Activated CD8-positive, alpha-beta T cell treated with anti-CD3 and anti-CD28 coated beads for 36 hours (primary cell): ENCODE measurements at regions of chr3 and their contacts with region 1.

Region 1: DNA sequence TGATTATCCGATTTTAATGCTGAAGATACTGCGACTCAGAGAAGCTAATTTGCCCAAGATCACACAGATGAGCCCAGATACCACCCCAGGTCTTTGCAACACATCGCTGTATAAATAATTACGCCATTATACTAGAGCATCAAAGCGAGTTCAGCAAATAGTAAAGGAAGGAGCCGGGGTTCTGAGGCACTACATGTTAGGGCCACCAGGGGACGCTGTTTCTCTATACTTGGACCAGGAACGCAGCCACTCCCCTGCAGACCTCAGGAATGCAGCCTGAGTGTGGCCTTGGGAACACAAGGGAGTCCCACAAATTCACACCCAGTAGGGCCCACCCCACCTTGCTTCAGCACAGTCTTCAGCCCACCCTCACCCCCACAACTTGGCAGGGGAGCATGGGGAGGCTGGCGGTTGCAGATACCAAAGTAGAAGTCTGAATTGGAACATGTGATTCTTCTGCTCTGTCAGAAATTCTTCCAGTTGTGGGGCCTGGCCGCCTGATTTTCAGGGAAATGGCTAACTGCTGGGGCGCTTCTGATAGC is 57.8 kb upstream of the RYK start:
- DNase-seq: peak; percentile 86
- ATAC-seq: peak; percentile 90
- H3K4me3 Mint-ChIP-seq: no peak overlapping the region
- H3K27ac Mint-ChIP-seq: no peak overlapping the region
- H3K4me1 Mint-ChIP-seq: peaks cover 2% of the 10 kb centered on the region
- H3K27me3 Mint-ChIP-seq: peaks cover 34% of the 10 kb centered on the region
- CTCF ChIP-seq: peak; percentile 96

Region 2: GRCh38 chr3:134197681-134198261 is 110.7 kb before region 1 on chr3:
- CTCF ChIA-PET with region 1: interaction called, 8 read pairs
- POLR2A ChIA-PET with region 1: no interaction called
- intact Hi-C with region 1: loop called (anchors 5 kb)
- DNase-seq: no peak
- ATAC-seq: peak; percentile 88
- H3K4me3 Mint-ChIP-seq: no peak overlapping the region
- H3K27ac Mint-ChIP-seq: no peak overlapping the region
- H3K4me1 Mint-ChIP-seq: peaks cover 8% of the 10 kb centered on the region
- H3K27me3 Mint-ChIP-seq: no peaks in the 10 kb centered on the region
- CTCF ChIP-seq: peak; percentile 77

Region 3: DNA sequence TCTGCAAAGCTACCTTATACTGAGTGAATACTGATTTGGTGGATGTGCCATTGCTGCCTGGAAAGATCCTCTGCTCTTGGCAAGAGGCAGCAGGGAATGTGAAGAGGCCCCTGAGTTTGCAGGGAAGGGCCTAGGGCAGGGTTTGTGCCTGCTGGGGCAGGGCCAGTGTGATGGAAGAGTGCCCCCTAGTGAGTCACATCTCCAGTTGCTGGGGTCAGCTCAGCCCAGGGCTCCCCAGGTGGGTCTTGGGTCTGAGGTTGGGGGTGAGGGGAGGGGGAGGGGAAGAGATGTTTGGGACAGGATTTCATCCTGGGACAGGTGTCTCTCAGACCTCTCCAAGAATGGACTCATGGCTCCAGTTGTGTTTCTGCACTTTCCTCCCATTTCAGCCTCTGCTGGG is 70.0 kb after region 1 on chr3:
- CTCF ChIA-PET with region 1: interaction called, 3 read pairs
- POLR2A ChIA-PET with region 1: no interaction called
- intact Hi-C with region 1: loop called (anchors 2 kb)
- DNase-seq: peak; percentile 40
- ATAC-seq: peak; percentile 57
- H3K4me3 Mint-ChIP-seq: no peak overlapping the region
- H3K27ac Mint-ChIP-seq: no peak overlapping the region
- H3K4me1 Mint-ChIP-seq: peaks cover 8% of the 10 kb centered on the region
- H3K27me3 Mint-ChIP-seq: peaks cover 39% of the 10 kb centered on the region
- CTCF ChIP-seq: peak; percentile 36

Region 4: DNA sequence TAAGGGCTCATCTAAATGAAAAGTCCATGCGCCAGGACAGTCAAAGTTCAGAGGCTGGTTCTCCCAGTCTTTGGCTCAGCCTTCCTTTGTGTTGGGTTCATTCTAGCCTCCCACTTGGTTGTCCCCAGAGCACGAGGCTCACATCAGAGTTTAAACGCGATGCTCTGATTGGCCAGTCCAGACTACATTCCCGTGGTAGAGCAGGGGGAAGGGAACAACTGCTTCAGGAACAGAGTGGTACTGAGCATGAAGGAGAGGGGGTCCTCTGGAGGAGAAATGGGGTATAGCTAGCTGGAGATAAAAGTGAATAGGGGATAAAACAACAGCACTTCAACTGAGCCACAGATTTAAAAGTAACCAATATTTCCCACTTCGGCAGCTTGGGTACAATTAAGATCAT is 145.2 kb after region 1 on chr3:
- CTCF ChIA-PET with region 1: interaction called, 10 read pairs
- POLR2A ChIA-PET with region 1: no interaction called
- intact Hi-C with region 1: no loop called
- DNase-seq: no peak
- ATAC-seq: no peak
- H3K4me3 Mint-ChIP-seq: no peak overlapping the region
- H3K27ac Mint-ChIP-seq: no peak overlapping the region
- H3K4me1 Mint-ChIP-seq: no peaks in the 10 kb centered on the region
- H3K27me3 Mint-ChIP-seq: peaks cover 6% of the 10 kb centered on the region
- CTCF ChIP-seq: no peak

Region 5: DNA sequence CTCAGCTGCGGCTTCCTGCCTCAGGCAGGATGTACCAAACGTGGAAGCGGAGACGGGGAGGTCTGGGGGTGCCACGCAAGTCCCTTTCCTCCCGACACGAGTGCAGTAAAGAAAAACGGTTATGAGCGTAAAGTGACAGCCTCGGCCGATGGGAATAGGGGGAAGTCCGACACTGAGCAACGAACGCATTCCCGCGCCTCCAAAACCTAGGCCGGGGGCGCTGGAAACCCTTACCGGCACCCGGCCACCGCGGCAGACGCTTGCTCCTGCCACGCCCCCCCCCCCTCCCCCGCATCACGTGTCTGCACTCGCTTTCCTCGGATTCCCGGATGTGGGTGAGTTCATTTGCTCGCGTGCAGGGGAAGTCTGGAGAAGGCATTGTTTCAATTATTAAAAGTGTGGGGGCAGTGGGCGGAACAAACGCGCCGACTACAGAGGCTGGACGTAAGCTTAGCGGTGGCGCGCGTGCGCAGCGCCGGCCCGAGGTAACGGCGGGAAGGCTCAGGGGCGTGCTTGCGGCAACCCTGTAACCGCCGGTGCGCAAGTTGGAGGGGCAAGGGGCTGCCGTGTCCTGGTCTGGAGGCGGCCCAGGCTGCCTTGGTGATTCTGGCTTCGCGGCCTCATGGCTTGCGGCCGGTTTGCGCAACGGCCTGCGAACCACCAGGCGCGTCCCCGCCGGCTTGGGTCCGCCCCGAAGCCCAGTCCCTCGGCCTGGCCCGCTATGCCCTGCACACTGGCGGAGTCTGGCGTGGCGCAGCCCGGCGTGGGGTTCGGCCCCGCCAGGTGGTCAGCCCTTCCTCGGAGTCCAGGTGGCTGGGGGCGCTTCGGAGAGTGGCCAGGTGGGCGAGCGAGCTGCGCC is 177.5 kb after region 1 on chr3 and contains the starts of genes ANAPC13 and CEP63:
- CTCF ChIA-PET with region 1: interaction called, 28 read pairs
- POLR2A ChIA-PET with region 1: no interaction called
- intact Hi-C with region 1: no loop called
- DNase-seq: peak; percentile 97
- ATAC-seq: peak; percentile 83
- H3K4me3 Mint-ChIP-seq: peak within 1 kb of the TSS; percentile 91
- H3K27ac Mint-ChIP-seq: peak within 1 kb of the TSS; percentile 99
- H3K4me1 Mint-ChIP-seq: peaks cover 45% of the 10 kb centered on the region
- H3K27me3 Mint-ChIP-seq: no peaks in the 10 kb centered on the region
- CTCF ChIP-seq: no peak
- total RNA-seq, gene ANAPC13: 27.3 to 28.0 TPM
- total RNA-seq, gene CEP63: 25.3 to 27.0 TPM

Region 6: GRCh38 chr3:134663721-134664456 is 355.5 kb after region 1 on chr3:
- CTCF ChIA-PET with region 1: no interaction called
- POLR2A ChIA-PET with region 1: no interaction called
- intact Hi-C with region 1: no loop called
- DNase-seq: no peak
- ATAC-seq: no peak
- H3K4me3 Mint-ChIP-seq: no peak overlapping the region
- H3K27ac Mint-ChIP-seq: no peak overlapping the region
- H3K4me1 Mint-ChIP-seq: no peaks in the 10 kb centered on the region
- H3K27me3 Mint-ChIP-seq: peaks cover 6% of the 10 kb centered on the region
- CTCF ChIP-seq: no peak